Kidney (tissue), 22 donors: ENCODE measurements at regions of chr4 and their contacts with region 1.

Region 1: GRCh38 chr4:185471235-185472102 is at the start of gene CCDC110:
- DNase-seq: peak; percentile 94 to 99 (median 96)
- H3K4me3 ChIP-seq: peak within 1 kb of the TSS; percentile 81 to 97 (median 85)
- H3K27ac ChIP-seq: peak within 1 kb of the TSS; percentile 9 to 74
- H3K4me1 ChIP-seq: peaks cover 0 to 2% (median 0%) of the 10 kb centered on the region in 3 donors
- H3K27me3 ChIP-seq: no peaks in the 10 kb centered on the region
- CTCF ChIP-seq: peak; percentile 72
- total RNA-seq, gene CCDC110: 4.5 TPM

Region 2: GRCh38 chr4:185597532-185598188 is 126.2 kb after region 1 on chr4:
- intact Hi-C with region 1: loop called (anchors 10 kb)
- DNase-seq: peak; percentile 80 to 86 (median 84)
- H3K4me3 ChIP-seq: no peak overlapping the region
- H3K27ac ChIP-seq: no peak overlapping the region
- H3K4me1 ChIP-seq: no peaks in the 10 kb centered on the region
- H3K27me3 ChIP-seq: no peaks in the 10 kb centered on the region
- CTCF ChIP-seq: peak; percentile 99